GM18951 (cell line): ENCODE measurements at regions of chr20 and their contacts with region 1.

Region 1: GRCh38 chr20:58236612-58237330 is 8.3 kb upstream of the ANKRD60 start:
- POLR2A ChIP-seq: no peak

Region 2: GRCh38 chr20:58402827-58403226 is 166.1 kb after region 1 on chr20:
- in situ Hi-C with region 1: no loop called
- POLR2A ChIP-seq: no peak

Region 3: DNA sequence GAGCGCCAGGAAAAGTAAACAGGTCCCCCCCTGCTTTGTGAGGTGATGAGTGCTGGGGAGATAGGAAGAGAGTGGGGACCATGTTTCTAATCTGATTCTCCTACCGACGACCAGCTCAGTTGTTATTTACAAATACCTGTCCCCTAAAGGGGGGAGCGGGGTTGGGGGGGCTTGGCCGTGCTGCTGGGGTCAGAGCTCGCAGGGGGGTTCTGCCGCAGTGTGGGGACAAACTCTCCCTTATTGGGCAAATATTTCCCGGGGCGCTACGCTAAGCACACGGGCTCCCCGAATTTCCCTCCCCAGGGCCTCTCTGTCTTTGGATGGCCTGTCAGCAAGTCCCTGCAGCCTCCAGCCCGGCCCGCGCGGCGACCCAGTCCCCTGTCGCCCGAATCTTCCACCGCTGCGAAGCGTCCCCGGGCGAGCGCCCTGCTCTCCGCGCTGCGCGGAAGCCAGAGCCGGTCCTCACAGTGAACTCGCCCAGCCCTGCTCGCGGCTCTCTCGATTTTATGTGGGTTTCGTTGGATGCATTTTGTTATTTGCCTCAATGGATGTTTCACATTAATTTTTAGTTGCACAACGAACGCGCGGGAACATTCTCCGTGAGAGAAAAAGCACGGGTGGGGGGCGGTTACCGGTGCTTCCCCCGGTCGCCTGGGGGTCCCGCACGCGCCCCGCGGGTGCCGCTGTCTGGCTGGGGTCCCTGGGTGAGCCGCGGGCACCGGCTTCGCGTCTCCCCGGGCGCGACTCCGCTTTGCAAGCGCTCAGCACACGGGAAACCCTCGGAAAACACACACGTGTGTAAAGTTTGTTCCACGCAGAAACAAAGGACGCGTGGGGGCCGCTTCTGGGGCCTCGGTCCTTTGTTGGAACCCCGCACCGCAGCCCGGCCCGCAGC is 412.8 kb after region 1 on chr20:
- in situ Hi-C with region 1: loop called (anchors 25 kb)
- POLR2A ChIP-seq: no peak